ENCODE measurements at regions of chr9 and their contacts with region 1.

Region 1: GRCh38 chr9:80285326-80285725 is 713.6 kb downstream of the TLE4 start:
- DNase-seq: peak; percentile 13
- H3K4me3 ChIP-seq: no peak overlapping the region
- H3K27ac ChIP-seq: no peak overlapping the region
- H3K4me1 ChIP-seq: no peaks in the 10 kb centered on the region
- H3K27me3 ChIP-seq: no peaks in the 10 kb centered on the region
- CTCF ChIP-seq: peak; percentile 23 to 43

Region 2: GRCh38 chr9:80231201-80231950 is 54.0 kb before region 1 on chr9:
- CTCF ChIA-PET with region 1: no interaction called
- dilution Hi-C with region 1: no loop called
- in situ Hi-C with region 1: no loop called
- intact Hi-C with region 1: no loop called
- DNase-seq: peak; percentile 5
- H3K4me3 ChIP-seq: no peak overlapping the region
- H3K27ac ChIP-seq: no peak overlapping the region
- H3K4me1 ChIP-seq: peaks cover 4% of the 10 kb centered on the region
- H3K27me3 ChIP-seq: peaks cover 2% of the 10 kb centered on the region
- CTCF ChIP-seq: no peak

Region 3: DNA sequence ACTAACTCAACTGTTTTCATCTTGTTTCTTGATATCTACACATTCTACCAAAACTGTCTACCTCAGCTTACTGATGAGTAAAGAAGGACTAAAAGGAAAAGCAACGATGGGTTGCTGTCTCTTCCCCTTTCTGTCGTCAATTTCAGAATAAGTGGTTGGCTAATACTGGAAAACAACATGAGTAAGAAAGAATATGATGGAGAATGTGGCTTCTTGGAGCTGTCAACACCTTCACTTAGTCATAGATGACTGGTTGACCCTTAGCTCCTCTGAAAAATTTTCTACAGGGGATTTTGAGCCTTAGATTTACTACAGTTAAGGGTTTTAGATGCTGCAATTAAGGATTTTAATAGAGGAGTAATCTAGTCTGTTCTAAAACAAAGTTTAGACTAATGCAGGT is 84.3 kb after region 1 on chr9:
- CTCF ChIA-PET with region 1: no interaction called
- dilution Hi-C with region 1: no loop called
- in situ Hi-C with region 1: no loop called
- intact Hi-C with region 1: no loop called
- DNase-seq: peak; percentile 35
- H3K4me3 ChIP-seq: no peak overlapping the region
- H3K27ac ChIP-seq: no peak overlapping the region
- H3K4me1 ChIP-seq: no peaks in the 10 kb centered on the region
- H3K27me3 ChIP-seq: no peaks in the 10 kb centered on the region
- CTCF ChIP-seq: no peak

Region 4: DNA sequence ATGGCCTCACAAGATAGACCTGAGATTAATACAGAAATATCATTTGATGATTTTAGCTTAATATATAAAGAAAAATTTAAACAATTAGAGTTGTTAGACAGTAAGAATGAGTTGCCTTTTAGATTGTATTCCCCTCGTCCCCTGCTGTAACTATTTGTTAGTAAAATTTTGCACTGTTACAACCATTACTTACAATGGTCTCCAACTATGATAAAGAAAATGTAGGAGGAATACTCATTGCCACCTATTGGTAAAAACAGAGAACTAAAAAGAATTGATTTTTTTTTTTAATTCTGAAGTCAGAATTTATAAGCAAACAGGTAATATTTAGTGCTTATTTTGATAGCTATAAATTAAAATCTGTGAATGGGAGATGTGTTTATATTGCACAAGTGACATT is 224.0 kb after region 1 on chr9:
- CTCF ChIA-PET with region 1: no interaction called
- dilution Hi-C with region 1: no loop called
- in situ Hi-C with region 1: no loop called
- intact Hi-C with region 1: loop called (anchors 2 kb)
- DNase-seq: no peak
- H3K4me3 ChIP-seq: no peak overlapping the region
- H3K27ac ChIP-seq: no peak overlapping the region
- H3K4me1 ChIP-seq: no peaks in the 10 kb centered on the region
- H3K27me3 ChIP-seq: no peaks in the 10 kb centered on the region
- CTCF ChIP-seq: peak; percentile 16 to 31

Measured in mammary epithelial cell (primary cell).